ENCODE measurements at regions of chr10 and their contacts with region 1.

Region 1: DNA sequence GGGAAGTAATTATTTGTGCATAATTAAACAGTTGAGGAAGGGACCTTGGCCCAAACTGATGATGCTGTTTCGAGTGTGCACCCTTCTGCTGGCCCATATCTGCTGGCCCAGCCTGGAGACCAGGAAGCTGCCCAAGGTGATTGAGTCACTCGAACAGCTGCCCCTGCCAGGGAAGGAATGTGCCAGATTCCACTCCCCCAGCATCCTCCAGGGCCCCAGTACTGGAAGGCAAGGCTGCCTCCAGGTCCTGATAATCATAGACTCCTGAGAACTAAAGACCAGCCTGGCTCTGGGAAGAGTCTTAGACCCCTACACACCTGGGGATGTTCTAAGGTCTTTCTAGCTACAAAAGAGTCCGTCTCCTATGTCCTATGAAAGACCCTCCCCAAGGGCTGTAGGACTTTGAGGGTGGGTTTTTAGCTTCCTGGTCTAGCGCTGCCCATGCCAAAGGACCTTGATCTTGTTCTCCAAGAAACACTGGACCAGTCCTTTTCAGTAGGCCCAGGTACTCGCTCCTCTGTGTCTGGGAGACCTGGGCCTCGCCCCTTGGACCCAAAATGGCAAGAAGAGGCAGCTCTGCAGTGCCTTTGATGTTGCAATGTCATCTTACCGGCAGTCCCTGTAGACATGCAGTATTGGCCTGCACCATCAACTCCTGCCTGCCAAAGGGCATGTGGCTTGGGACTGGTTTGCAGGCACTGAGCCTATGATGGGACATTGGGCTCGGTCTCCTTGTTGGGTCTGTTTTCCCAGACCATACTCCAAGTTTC is 103.2 kb upstream of the GPR26 start:
- DNase-seq: no peak
- ATAC-seq: no peak
- H3K4me3 ChIP-seq: no peak overlapping the region
- H3K27ac ChIP-seq: no peak overlapping the region
- H3K4me1 ChIP-seq: no peaks in the 10 kb centered on the region
- H3K27me3 ChIP-seq: no peaks in the 10 kb centered on the region
- CTCF ChIP-seq: no peak
- POLR2A ChIP-seq: no peak

Region 2: GRCh38 chr10:123132576-123133477 is 430.2 kb before region 1 on chr10:
- intact Hi-C with region 1: loop called (anchors 5 kb)
- DNase-seq: peak; percentile 87 to 90 (median 87)
- ATAC-seq: peak; percentile 83
- H3K4me3 ChIP-seq: no peak overlapping the region
- H3K27ac ChIP-seq: no peak overlapping the region
- H3K4me1 ChIP-seq: peaks cover 52% of the 10 kb centered on the region
- H3K27me3 ChIP-seq: peaks cover 0 to 40% of the 10 kb centered on the region in 2 donors
- CTCF ChIP-seq: peak; percentile 83 to 95 (median 89)
- POLR2A ChIP-seq: no peak

Measured in body of pancreas (tissue), 4 donors.